Heart left ventricle (tissue), 16 donors: ENCODE measurements at regions of chr1 and their contacts with region 1.

Region 1: DNA sequence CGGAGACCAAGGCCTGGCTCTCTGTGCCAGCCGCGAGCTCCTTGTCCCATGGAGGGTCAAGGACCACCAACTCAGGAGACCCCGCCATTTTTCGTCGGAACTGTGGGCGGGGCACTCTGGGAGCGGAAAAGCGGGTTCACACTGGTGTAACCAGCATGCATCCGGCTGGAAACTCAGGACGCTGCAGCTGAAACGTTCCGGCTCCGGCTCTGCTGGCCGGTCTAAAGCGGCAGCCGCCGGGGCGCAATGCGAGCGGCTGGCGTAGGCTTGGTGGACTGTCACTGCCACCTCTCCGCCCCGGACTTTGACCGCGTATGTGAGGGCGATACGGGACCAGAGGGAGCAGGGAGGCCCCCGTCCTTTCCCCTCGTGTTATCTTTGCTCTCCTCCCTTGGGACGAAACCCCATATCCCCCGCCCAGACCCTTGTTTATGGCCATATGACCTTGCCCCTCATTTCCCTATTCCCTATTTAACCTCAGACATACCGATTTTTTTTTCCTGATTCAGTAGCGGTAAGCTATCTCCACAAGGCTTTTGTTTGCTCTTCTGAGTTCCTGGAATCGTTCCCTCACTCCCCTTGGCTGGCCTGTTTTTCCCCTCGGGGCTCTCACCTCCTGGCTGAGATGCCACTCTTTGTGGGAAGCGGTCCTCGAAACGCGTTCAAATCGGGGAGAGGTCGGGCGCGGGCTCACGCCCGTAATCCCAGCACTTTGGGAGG is at the starts of genes NSL1 and TATDN3:
- DNase-seq: peak; percentile 86 to 96 (median 90)
- ATAC-seq: peak; percentile 93 to 97 (median 96)
- H3K4me3 ChIP-seq: peak within 1 kb of the TSS; percentile 65 to 100 (median 81)
- H3K27ac ChIP-seq: peak within 1 kb of the TSS; percentile 79 to 97 (median 94)
- H3K4me1 ChIP-seq: peaks cover 0 to 57% (median 20%) of the 10 kb centered on the region in 12 donors
- H3K27me3 ChIP-seq: no peaks in the 10 kb centered on the region
- CTCF ChIP-seq: peak in 2 of 12 donors; percentile 12 to 15
- POLR2A ChIP-seq: peak in 1 of 2 donors; percentile 75
- total RNA-seq, gene NSL1: 22.6 to 33.3 (median 24.9) TPM
- total RNA-seq, gene TATDN3: 20.2 to 30.3 (median 24.7) TPM

Region 2: GRCh38 chr1:212857992-212858460 is 66.2 kb after region 1 on chr1 and contains the start of gene FLVCR1:
- intact Hi-C with region 1: loop called in 2 of 10 experiments (anchors 1 to 5 kb)
- DNase-seq: peak; percentile 97 to 98 (median 98)
- ATAC-seq: peak; percentile 100
- H3K4me3 ChIP-seq: peak within 1 kb of the TSS; percentile 69 to 99 (median 95)
- H3K27ac ChIP-seq: peak within 1 kb of the TSS; percentile 42 to 91 (median 84)
- H3K4me1 ChIP-seq: peaks cover 0 to 48% (median 25%) of the 10 kb centered on the region in 12 donors
- H3K27me3 ChIP-seq: no peaks in the 10 kb centered on the region
- CTCF ChIP-seq: no peak
- POLR2A ChIP-seq: peak in 1 of 2 donors; percentile 76
- total RNA-seq, gene FLVCR1: 0.44 to 3.0 (median 2.4) TPM